K562 (cell line): ENCODE measurements at regions of chr7 and their contacts with region 1.

Region 1: GRCh38 chr7:134669845-134670373 is 23.3 kb downstream of the BPGM start:
- DNase-seq: peak in 1 of 4 experiments; percentile 50
- ATAC-seq: peak; percentile 87
- H3K4me3 ChIP-seq: no peak overlapping the region
- H3K27ac ChIP-seq: no peak overlapping the region
- H3K4me1 ChIP-seq: peaks cover 0 to 7% of the 10 kb centered on the region in 2 experiments; a peak in 4 of 5 replicates
- H3K27me3 ChIP-seq: no peaks in the 10 kb centered on the region
- CTCF ChIP-seq: no peak
- EP300 ChIP-seq: no peak
- POLR2A ChIP-seq: no peak
- RAD21 ChIP-seq: no peak; a peak in 1 of 4 replicates

Region 2: DNA sequence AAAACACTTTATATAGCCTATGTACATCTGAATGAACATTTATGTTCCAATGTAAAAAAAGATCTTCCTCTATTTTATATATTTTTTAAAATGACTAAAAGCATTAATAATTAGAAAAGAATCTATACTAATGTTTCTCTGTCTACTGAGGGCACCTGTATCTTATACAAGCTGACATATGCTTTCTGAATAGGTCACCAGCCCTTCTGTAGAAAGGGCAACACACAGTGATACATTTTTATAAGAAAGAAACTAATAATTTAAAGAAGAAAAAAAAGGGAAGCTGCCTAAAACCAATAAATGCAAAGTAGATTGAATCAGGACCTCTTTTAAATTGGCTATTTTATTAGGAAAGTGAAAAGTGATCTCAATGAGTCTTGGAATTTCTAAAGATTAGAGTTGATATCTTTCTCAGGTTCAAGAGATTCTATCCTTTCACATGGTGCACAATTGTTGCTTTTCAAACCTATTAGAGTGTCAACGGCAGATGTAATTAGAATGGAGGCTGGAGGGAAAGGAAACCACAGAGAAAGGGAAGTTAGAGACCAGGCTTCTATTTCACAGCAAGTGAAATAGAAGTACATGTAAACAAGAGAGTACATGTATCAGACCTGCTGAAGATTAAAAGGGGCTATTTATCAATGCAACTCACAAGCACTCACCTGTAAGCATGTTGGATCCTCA is 1300.9 kb after region 1 on chr7:
- CTCF ChIA-PET with region 1: no interaction called
- POLR2A ChIA-PET with region 1: no interaction called
- in situ Hi-C with region 1: loop called (anchors 25 kb)
- intact Hi-C with region 1: no loop called
- DNase-seq: no peak
- ATAC-seq: no peak
- H3K4me3 ChIP-seq: no peak overlapping the region
- H3K27ac ChIP-seq: peak overlapping the region; percentile 13; the same call in 1 of the 3 replicates
- H3K4me1 ChIP-seq: peaks cover 6 to 33% of the 10 kb centered on the region in 2 experiments; a peak in 4 of 5 replicates
- H3K27me3 ChIP-seq: no peaks in the 10 kb centered on the region
- CTCF ChIP-seq: no peak
- EP300 ChIP-seq: no peak
- POLR2A ChIP-seq: no peak
- RAD21 ChIP-seq: no peak